CD4-positive, alpha-beta T cell (primary cell): ENCODE measurements at regions of chr1 and their contacts with region 1.

Region 1: GRCh38 chr1:39901698-39902459 is at the start of gene MYCL:
- DNase-seq: peak; percentile 44 to 83 (median 60)
- ATAC-seq: peak; percentile 85
- H3K4me3 ChIP-seq: peak within 1 kb of the TSS; percentile 66
- H3K4me3 Mint-ChIP-seq: peak within 1 kb of the TSS; percentile 82
- H3K27ac ChIP-seq: no peak within 1 kb of the TSS
- H3K27ac Mint-ChIP-seq: no peak within 1 kb of the TSS
- H3K4me1 ChIP-seq: peaks cover 19% of the 10 kb centered on the region
- H3K4me1 Mint-ChIP-seq: no peaks in the 10 kb centered on the region
- H3K27me3 ChIP-seq: peaks cover 41 to 49% of the 10 kb centered on the region in 2 experiments
- H3K27me3 Mint-ChIP-seq: peaks cover 78% of the 10 kb centered on the region
- CTCF ChIP-seq: peak; percentile 80
- total RNA-seq, gene MYCL: 0.08 to 0.50 TPM

Region 2: DNA sequence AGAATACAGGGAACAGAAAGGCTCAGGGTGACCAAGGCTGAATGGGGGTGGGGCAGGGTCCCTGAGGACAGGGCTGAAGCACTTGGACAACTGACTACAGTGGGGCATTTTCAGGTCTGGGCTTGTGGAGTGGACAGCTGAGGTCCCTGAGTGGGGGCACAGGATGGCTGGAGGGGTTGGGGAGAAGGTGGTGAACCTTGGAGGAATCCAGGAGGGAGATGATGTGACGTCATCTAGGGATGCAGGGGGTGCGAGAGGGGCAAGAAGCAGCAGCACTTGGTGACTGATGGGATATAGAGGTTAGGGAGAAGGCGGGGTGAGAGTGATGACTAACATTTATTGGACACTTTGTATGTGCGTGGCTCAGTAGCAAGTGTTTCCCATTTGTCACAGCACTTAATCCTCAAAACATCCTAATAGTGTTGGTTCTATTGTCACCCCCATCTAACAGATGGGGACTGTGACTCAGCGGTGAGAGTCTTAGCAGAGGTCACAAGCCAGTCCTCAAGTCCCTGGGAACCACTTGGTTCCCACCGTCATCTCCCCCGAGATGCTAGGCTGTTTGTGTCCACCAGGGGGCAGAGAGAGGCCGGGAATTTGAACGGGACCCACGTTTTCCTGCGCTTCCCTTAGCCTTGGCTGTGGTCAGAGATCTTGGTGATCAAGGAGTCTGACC is 85.3 kb before region 1 on chr1:
- CTCF ChIA-PET with region 1: interaction called, 38 read pairs
- POLR2A ChIA-PET with region 1: interaction called, 4 read pairs
- intact Hi-C with region 1: loop called (anchors 1 kb)
- DNase-seq: peak; percentile 17 to 84 (median 50)
- ATAC-seq: peak; percentile 63
- H3K4me3 ChIP-seq: peak overlapping the region; percentile 33
- H3K4me3 Mint-ChIP-seq: peak overlapping the region; percentile 42
- H3K27ac ChIP-seq: no peak overlapping the region
- H3K27ac Mint-ChIP-seq: no peak overlapping the region
- H3K4me1 ChIP-seq: peaks cover 15% of the 10 kb centered on the region
- H3K4me1 Mint-ChIP-seq: peaks cover 9% of the 10 kb centered on the region
- H3K27me3 ChIP-seq: peaks cover 0 to 6% of the 10 kb centered on the region in 2 experiments
- H3K27me3 Mint-ChIP-seq: peaks cover 20% of the 10 kb centered on the region
- CTCF ChIP-seq: peak; percentile 74

Region 3: GRCh38 chr1:39845275-39846116 is 56.4 kb before region 1 on chr1:
- CTCF ChIA-PET with region 1: interaction called, 18 read pairs
- POLR2A ChIA-PET with region 1: interaction called, 4 read pairs
- intact Hi-C with region 1: loop called in 1 of 2 experiments (anchors 2 kb)
- DNase-seq: peak; percentile 51 to 96 (median 72)
- ATAC-seq: peak; percentile 99
- H3K4me3 ChIP-seq: no peak overlapping the region
- H3K4me3 Mint-ChIP-seq: peak overlapping the region; percentile 68
- H3K27ac ChIP-seq: peak overlapping the region; percentile 62 to 74
- H3K27ac Mint-ChIP-seq: peak overlapping the region; percentile 89
- H3K4me1 ChIP-seq: peaks cover 46% of the 10 kb centered on the region
- H3K4me1 Mint-ChIP-seq: peaks cover 53% of the 10 kb centered on the region
- H3K27me3 ChIP-seq: no peaks in the 10 kb centered on the region
- H3K27me3 Mint-ChIP-seq: no peaks in the 10 kb centered on the region
- CTCF ChIP-seq: no peak